AG04449 (cell line): ENCODE measurements at regions of chr11 and their contacts with region 1.

Region 1: DNA sequence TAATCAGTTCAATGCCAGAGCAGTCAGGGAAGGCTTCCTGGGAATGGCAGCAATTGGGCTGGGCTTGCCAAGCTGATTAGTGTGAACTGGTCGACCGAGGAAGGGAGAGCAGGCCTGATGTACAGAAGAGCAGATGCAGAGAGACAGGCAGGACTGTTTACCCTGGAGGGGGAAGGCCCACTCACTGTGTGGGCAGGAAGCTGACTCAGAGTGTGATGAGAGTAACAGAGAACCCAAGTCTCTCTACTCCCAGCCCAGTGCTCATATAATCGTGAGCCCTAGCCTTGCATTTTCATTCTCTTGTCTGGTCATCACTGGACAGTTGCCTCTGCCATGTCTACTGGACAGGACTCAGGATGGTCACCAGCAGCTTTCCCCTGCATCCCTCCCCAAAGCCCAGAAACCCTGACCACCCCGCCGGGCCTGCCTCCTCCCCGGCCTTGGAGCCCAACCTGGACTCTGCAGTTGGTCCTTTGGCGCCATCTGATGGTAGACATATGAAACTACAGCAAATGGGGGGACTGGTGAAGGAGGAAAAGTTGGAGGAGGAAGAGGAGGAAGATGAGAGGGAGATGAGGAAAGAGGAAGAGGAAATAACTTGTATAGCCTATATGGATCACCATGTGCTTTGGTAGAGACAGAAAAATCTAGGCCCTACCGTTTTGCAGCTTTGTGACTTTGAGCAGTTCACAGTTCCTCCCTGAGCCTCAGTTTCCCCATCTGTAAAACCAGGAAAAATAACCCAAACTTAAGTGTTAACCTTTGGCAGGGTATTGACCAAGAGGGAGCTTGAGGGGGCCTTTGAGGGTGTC is 43.4 kb upstream of the PRDM11 start:
- DNase-seq: no peak
- H3K4me3 ChIP-seq: peak overlapping the region; percentile 29; the same call in 1 of the 2 replicates
- CTCF ChIP-seq: peak; percentile 90

Region 2: GRCh38 chr11:44916801-44917385 is 186.1 kb before region 1 on chr11:
- CTCF ChIA-PET with region 1: interaction called, 29 read pairs
- POLR2A ChIA-PET with region 1: no interaction called
- DNase-seq: no peak
- H3K4me3 ChIP-seq: no peak overlapping the region
- CTCF ChIP-seq: no peak

Region 3: DNA sequence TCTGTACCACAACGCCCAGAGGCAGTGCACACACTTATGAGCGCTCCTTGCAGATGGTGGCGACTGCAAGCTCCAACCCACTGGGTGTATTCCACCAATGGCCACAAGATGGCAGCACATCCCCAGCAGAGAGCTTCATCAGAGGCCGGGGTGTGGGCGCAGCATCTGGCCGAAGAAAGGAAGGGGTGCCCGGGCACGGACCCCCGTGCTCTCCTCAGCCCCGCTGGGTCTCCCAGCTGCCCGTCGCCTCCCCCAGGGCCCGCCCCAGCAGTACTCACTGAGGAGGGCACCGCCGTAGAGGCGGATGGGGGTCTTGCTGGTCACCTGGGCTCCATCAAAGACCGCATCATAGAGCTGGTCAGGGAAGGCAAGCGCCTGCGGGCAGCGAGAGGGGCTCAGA is 166.5 kb before region 1 on chr11:
- CTCF ChIA-PET with region 1: interaction called, 2,237 read pairs
- POLR2A ChIA-PET with region 1: interaction called, 5 read pairs
- DNase-seq: peak; percentile 12
- H3K4me3 ChIP-seq: no peak overlapping the region
- CTCF ChIP-seq: peak; percentile 96

Region 4: GRCh38 chr11:45133871-45134270 is 30.9 kb after region 1 on chr11:
- CTCF ChIA-PET with region 1: interaction called, 10 read pairs
- POLR2A ChIA-PET with region 1: no interaction called
- DNase-seq: no peak
- H3K4me3 ChIP-seq: no peak overlapping the region
- CTCF ChIP-seq: no peak

Region 5: GRCh38 chr11:45285930-45286632 is 183.1 kb after region 1 on chr11 and contains the start of gene SYT13:
- CTCF ChIA-PET with region 1: interaction called, 439 read pairs
- POLR2A ChIA-PET with region 1: no interaction called
- DNase-seq: no peak
- H3K4me3 ChIP-seq: no peak within 1 kb of the TSS
- CTCF ChIP-seq: no peak